Activated naive CD4-positive, alpha-beta T cell treated with anti-CD3 and anti-CD28 coated beads, Interleukin-2, amount 10 ng/mL, durations not matched to agents 7 days and 5 days (primary cell): ENCODE measurements at regions of chr6 and their contacts with region 1.

Region 1: GRCh38 chr6:83067448-83068413 is at the start of gene DOP1A:
- DNase-seq: peak; percentile 97
- H3K4me3 Mint-ChIP-seq: peak within 1 kb of the TSS; percentile 91
- H3K27ac Mint-ChIP-seq: peak within 1 kb of the TSS; percentile 93
- H3K4me1 Mint-ChIP-seq: peaks cover 45% of the 10 kb centered on the region
- H3K27me3 Mint-ChIP-seq: no peaks in the 10 kb centered on the region

Region 2: DNA sequence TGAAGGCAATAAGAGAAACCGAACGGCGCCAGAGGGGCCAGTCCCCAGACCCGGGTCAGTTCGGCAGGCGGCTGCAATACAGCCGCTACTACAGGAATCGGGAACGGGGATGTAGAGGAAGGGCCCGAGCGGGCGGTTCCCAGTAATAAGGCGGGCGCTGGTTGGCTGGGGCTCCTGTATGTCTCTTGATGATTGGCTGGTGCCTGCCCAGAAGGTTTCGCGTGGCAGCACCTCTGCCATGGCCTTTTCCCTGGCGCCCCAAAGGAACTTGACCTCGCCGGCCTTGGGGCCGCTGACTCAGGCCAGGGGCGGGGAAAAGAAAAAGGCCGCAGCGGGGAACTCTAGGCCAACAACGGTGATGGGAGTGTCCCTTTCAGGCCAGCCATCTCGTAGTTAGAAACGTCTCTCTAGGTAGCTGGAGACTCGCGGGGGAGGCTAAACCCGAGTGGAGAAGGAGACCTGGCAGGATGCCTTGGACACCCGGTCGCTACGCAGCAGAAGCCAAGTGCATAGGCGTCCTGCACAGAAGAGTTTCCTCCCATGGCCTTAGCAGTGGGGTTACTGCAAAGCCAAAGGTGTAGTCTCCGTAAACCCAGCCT is 820.0 kb before region 1 on chr6 and contains the start of gene IBTK:
- CTCF ChIA-PET with region 1: interaction called, 13 read pairs
- DNase-seq: peak; percentile 93
- H3K4me3 Mint-ChIP-seq: peak within 1 kb of the TSS; percentile 92
- H3K27ac Mint-ChIP-seq: peak within 1 kb of the TSS; percentile 90
- H3K4me1 Mint-ChIP-seq: peaks cover 38% of the 10 kb centered on the region
- H3K27me3 Mint-ChIP-seq: peaks cover 4% of the 10 kb centered on the region

Region 3: GRCh38 chr6:82270881-82271645 is 796.7 kb before region 1 on chr6:
- CTCF ChIA-PET with region 1: interaction called, 10 read pairs
- DNase-seq: no peak
- H3K4me3 Mint-ChIP-seq: no peak overlapping the region
- H3K27ac Mint-ChIP-seq: no peak overlapping the region
- H3K4me1 Mint-ChIP-seq: no peaks in the 10 kb centered on the region
- H3K27me3 Mint-ChIP-seq: no peaks in the 10 kb centered on the region

Region 4: DNA sequence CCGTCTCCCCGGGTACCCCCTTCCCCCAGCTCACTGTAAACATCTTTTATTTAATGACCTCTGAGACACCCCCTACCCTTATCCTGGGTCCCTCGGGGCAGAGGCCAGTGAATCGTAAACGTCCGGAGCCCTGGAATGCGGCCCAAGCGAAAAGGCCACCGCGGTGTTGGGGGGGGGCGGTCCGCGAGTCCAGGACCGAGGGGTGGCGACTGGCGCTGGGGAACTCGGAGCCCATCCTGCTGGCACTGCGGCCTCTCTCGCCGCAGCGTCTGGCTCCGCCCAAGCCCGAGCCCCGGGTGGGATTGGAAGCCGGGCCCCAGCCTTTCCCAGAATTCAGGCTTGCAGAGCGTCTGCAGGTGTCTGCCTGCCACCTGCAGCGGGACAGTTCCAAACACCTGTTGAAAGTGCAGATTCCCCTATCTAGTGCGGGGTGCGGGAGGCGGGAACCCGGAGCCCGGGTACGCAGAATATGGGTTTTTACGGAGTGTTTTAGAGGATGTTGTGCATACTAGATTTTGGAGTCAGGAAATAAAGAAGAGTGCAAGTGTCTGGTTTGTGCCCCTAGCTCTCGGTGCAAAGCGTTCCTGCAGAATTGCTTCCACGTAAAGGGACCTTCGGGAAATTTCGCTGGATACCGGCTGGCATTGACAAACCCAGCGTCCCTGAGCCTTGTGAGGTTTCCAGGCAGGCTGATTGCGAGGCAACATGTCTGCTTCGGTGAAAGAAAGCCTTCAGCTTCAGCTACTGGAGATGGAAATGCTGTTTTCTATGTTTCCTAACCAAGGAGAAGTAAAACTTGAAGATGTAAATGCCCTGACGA is 126.2 kb after region 1 on chr6:
- CTCF ChIA-PET with region 1: interaction called, 35 read pairs
- DNase-seq: peak; percentile 47
- H3K4me3 Mint-ChIP-seq: peak overlapping the region; percentile 97
- H3K27ac Mint-ChIP-seq: no peak overlapping the region
- H3K4me1 Mint-ChIP-seq: peaks cover 44% of the 10 kb centered on the region
- H3K27me3 Mint-ChIP-seq: peaks cover 12% of the 10 kb centered on the region

Region 5: DNA sequence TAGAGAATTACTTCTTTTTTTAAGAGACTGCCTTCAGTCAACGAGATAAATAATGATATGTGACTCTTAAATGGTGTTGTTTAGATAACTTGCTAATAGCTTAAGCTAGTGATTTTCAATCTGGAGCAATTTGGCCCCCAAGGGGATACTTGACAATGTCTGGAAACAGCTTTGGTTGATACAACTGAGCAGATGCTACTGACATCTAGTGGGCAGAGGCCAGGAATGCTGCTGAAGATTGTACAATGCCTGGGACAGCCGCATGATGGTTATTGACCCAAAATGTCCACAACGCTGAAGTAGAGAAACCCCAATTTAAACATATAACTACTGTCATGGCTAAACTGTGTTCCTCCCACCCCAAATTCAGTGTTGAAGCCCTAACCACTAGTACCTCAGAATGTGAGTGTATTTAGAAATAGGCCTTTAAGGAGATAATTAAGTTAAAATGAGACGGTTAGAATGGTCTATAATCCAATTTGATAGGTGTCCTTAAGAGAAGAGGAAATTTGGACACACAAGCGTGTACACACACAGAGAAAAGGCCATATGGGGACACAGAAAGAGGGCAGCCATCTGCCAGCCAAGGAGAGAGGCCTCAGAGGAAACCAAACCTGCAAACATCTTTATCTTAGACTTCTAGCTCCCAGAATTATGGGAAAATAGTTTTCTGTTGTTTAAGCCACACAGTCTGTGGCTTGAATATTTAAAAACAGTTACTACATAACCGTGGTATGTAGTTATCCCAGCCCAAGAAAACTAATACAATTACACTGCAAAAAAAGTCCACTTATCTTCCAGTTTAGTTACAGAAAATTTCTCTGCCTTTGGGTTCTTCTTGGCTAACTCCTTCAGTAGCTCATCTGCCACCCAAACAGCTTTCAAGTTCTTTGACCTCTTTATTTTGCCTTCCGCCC is 147.7 kb after region 1 on chr6:
- CTCF ChIA-PET with region 1: interaction called, 169 read pairs
- DNase-seq: peak; percentile 70
- H3K4me3 Mint-ChIP-seq: no peak overlapping the region
- H3K27ac Mint-ChIP-seq: no peak overlapping the region
- H3K4me1 Mint-ChIP-seq: no peaks in the 10 kb centered on the region
- H3K27me3 Mint-ChIP-seq: peaks cover 12% of the 10 kb centered on the region

Region 6: DNA sequence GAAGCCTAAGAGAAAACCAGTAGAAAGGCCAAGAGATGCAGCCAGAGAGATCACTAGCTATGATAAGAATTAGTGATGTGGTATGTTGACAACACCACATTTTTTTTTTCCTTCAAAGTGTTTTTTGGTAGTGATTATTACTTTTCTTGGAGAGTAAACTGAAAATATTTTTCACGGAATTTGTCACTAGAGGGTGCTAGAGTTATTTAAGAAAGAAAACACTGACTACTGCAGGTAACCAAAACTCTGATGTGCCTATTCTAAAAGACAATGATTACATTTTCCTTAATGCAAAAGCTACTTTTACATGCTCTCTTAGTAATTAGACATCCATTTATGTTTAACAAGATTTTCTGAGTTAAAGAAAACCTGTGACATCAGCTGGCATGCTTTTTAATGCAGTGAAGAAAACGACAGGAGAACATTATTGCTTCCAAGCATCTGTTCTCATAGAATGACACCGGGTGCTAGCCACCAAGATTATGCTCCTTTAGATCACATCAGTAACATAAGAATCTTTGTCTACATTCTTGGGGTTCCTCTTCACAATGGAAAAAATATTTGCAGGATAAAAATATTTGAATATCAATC is 154.3 kb after region 1 on chr6:
- CTCF ChIA-PET with region 1: interaction called, 169 read pairs
- DNase-seq: no peak
- H3K4me3 Mint-ChIP-seq: no peak overlapping the region
- H3K27ac Mint-ChIP-seq: no peak overlapping the region
- H3K4me1 Mint-ChIP-seq: no peaks in the 10 kb centered on the region
- H3K27me3 Mint-ChIP-seq: peaks cover 4% of the 10 kb centered on the region

Region 7: GRCh38 chr6:83514866-83515466 is 447.2 kb after region 1 on chr6:
- CTCF ChIA-PET with region 1: interaction called, 36 read pairs
- DNase-seq: peak; percentile 33
- H3K4me3 Mint-ChIP-seq: no peak overlapping the region
- H3K27ac Mint-ChIP-seq: no peak overlapping the region
- H3K4me1 Mint-ChIP-seq: peaks cover 3% of the 10 kb centered on the region
- H3K27me3 Mint-ChIP-seq: peaks cover 27% of the 10 kb centered on the region